ENCODE measurements at regions of chr2 and their contacts with region 1.

Region 1: DNA sequence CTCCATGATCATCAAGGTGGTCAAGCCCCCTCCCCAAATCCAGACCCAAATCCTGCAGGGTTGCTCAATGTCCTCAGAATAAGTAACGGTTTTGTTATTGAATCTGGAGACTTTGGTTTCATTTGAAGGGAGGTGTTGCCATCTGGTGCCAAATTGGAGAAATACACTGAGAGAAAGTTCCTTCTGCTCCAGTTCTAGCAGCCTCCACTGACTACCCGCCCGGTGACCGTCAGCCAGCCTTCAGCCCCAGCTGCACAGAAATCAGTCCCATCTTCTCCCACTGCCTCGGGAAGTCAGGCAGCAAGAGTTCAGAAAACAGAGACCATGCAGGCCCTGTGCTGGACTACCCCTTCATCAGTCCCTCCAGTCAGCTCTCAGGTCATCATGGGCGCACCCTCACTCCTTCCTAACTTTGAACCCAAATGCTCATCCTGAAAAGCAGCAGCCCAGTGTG is 38.7 kb downstream of the PKDCC start:
- DNase-seq: peak; percentile 48 to 49
- ATAC-seq: peak; percentile 71

Region 2: GRCh38 chr2:40690525-40690924 is 1396.0 kb before region 1 on chr2:
- intact Hi-C with region 1: no loop called
- DNase-seq: no peak
- ATAC-seq: no peak

Region 3: GRCh38 chr2:41853427-41854216 is 232.9 kb before region 1 on chr2:
- intact Hi-C with region 1: loop called (anchors 5 kb)
- DNase-seq: peak in 1 of 2 donors; percentile 61
- ATAC-seq: peak; percentile 57

Region 4: DNA sequence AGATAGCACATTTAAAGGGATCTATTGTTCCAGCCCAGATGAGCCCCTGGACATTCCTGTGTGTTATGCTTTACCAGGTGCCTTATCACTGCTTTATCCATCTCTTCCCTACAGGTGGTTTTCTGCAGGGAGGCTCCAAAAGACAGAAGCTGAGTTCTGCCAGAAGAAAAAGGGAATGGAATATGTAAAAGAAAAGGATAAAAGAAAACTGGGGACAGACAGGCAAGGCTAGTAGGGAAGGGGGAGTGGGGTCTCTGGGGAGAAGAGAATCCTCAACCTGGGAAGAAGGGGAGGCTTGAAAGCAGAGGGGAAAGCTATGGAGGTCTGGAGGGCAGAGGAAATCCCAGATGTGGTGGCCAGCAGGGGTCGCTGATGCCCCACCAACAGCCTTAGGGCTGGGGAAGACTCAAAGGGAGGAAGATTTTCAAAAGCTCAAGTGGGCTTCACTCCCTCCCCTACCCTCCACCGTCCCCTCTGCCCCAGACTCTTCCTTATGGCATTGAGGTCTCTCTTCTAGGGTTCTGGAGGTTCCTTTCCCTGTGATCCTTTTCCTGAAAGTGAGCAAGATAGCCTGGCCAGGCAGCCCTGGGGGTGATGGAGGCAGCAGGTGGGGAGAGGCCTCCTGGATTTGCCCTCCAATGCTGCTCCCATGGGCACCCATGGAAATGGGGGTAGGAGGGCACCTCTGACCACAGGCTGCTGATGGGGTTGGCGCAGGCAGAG is 216.8 kb before region 1 on chr2:
- intact Hi-C with region 1: loop called in 1 of 2 experiments (anchors 1 kb)
- DNase-seq: peak; percentile 53 to 86
- ATAC-seq: peak; percentile 92

Region 5: GRCh38 chr2:42169100-42169873 is 82.8 kb after region 1 on chr2 and contains the start of gene EML4:
- intact Hi-C with region 1: no loop called
- DNase-seq: peak; percentile 87 to 92
- ATAC-seq: peak; percentile 92
- total RNA-seq, gene EML4: 68.2 to 76.5 TPM